Natural killer cell (primary cell): ENCODE measurements at regions of chr1 and their contacts with region 1.

Region 1: DNA sequence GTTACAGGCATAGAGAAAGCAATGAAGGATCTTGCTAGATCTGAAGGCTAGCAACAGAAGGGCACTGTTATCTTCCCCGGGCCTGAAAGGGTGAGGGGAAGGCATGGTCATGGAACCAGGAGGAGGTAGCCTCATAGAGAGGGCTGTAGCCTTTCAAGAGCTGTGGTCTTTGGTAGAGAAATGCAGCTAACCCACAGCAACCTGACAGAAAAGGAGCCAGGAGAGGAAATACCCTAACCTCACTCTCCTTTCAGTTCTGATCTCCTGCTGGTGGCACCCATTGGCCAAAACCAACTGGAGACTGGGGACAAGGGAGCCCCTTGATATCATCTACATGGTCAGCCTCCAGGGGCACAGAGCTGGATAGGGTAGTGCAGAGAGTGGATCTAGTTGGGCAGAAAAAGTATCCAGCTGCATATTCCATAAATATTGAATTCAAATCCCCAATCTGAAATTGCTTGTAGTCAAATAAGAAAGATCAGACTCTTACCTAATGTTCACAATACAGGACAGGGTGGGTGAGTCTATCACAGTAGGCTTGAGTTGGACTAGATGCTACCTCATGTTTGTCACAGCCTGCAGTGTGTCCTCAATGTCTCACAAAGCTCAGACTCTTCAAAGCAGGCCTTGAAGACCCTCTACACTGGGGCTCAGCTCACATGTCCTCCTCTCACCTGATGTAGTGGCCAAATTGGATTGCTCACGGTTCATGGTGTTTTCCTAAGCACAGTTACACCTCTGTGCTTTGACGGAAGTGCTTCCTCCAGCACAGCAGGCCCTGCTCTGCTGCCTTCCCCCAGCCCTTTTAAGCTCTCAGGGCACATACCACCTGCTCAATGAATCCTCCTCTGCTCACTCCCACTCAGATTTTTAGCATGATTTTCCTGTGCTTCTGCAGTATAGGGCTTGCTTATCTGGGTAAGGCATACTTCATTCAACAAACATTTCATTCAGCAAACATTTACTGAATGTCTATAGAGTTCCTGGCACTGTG is 74.1 kb upstream of the JUN start:
- DNase-seq: peak in 1 of 2 donors; percentile 62
- ATAC-seq: peak; percentile 32 to 68 (median 58)
- H3K4me3 ChIP-seq: no peak overlapping the region
- H3K4me3 Mint-ChIP-seq: no peak overlapping the region
- H3K27ac ChIP-seq: peak overlapping the region; percentile 14
- H3K27ac Mint-ChIP-seq: peak overlapping the region; percentile 42 to 74
- H3K4me1 ChIP-seq: peaks cover 39% of the 10 kb centered on the region
- H3K4me1 Mint-ChIP-seq: peaks cover 54 to 74% of the 10 kb centered on the region in 2 donors
- H3K27me3 ChIP-seq: no peaks in the 10 kb centered on the region
- H3K27me3 Mint-ChIP-seq: no peaks in the 10 kb centered on the region
- CTCF ChIP-seq: no peak

Region 2: DNA sequence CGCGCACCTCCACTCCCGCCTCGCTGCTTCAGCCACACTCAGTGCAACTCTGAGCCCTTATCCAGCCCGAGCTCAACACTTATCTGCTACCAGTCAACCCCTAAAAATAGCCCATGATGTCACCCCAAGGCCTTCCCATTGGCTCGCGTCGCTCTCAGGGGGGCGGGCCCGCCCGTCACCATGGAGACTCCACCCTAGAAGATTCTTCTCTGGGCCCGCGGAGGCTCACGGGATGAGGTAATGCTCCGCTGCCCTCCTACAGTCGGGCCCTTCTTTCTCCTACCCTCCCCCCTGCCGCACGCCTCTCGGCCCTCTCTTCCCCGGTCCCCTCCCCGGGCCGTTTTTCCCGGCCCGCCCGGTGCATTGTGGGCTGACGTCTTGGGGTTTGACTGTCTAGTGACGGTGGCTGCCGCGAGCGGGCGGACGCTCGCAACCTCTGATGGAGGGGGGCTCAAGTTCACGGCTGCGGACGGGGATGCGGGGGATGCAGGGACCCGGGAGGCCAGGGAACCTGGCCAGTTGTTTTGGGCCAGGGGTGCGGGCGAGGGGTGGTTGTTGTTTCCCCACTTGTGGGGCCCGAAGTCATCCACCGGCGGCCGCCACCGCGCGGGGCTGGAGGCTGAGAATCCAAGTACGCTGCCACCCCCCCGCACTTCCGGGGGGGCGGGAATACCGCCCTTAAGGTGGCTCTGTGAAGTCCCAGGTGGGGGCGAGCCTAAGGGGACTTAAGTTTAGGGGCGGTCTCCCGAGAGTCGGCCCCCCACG is 73.8 kb before region 1 on chr1 and contains the start of gene JUN:
- intact Hi-C with region 1: no loop called
- DNase-seq: peak; percentile 98 to 99
- ATAC-seq: peak; percentile 66 to 86 (median 69)
- H3K4me3 ChIP-seq: peak within 1 kb of the TSS; percentile 97
- H3K4me3 Mint-ChIP-seq: peak within 1 kb of the TSS; percentile 92
- H3K27ac ChIP-seq: peak within 1 kb of the TSS; percentile 98
- H3K27ac Mint-ChIP-seq: peak within 1 kb of the TSS; percentile 96 to 99
- H3K4me1 ChIP-seq: peaks cover 25% of the 10 kb centered on the region
- H3K4me1 Mint-ChIP-seq: peaks cover 47 to 61% of the 10 kb centered on the region in 2 donors
- H3K27me3 ChIP-seq: no peaks in the 10 kb centered on the region
- H3K27me3 Mint-ChIP-seq: peaks cover 0 to 9% of the 10 kb centered on the region in 2 donors
- CTCF ChIP-seq: no peak
- total RNA-seq, gene JUN: 1,209 to 1,942 (median 1,808) TPM

Region 3: DNA sequence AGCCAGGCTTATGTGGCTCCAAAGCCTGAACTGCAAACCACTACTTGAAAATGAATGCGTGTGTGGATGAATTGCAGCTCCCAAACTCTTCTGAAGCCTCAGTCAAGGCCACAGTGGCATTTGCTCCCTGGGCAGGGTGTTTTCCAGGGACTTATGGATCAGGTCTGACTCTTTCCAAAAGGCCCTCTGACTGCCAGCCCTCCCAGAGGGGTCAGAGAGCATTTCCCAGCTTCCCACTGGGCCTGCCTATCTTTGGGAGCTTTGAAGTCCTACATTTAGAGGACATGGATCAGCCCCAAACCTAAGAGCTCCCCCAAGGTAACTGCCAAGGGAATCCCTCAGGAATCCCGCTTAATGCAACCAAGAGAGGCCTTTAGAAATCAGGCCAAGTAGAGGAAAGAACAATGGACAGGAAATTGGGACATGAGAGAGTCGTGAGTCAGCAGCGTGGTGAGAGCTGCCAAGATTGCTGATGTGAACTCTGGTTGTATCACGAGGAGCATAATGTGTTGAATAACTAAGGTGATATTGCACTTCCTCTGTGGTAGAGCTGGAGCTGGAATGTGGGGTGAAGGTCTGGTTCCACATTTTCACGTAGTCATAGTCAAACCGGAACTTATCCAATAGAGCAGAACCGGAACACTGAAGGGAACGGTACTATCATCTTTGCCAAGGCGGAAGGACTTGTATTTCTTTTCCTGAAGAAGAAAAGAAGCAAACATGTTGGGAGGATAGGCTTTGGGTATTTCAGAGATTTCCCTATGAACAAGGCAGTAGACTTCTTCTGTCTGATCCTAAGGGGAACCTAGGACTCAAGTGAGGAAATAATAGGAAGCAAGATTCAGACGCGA is 25.3 kb after region 1 on chr1:
- intact Hi-C with region 1: loop called (anchors 2 kb)
- DNase-seq: peak in 1 of 2 donors; percentile 21
- ATAC-seq: peak in 2 of 3 donors; percentile 21 to 69
- H3K4me3 ChIP-seq: no peak overlapping the region
- H3K4me3 Mint-ChIP-seq: no peak overlapping the region
- H3K27ac ChIP-seq: peak overlapping the region; percentile 20
- H3K27ac Mint-ChIP-seq: peak overlapping the region in 1 of 2 donors; percentile 5
- H3K4me1 ChIP-seq: peaks cover 43% of the 10 kb centered on the region
- H3K4me1 Mint-ChIP-seq: peaks cover 51 to 88% of the 10 kb centered on the region in 2 donors
- H3K27me3 ChIP-seq: no peaks in the 10 kb centered on the region
- H3K27me3 Mint-ChIP-seq: no peaks in the 10 kb centered on the region
- CTCF ChIP-seq: no peak

Region 4: DNA sequence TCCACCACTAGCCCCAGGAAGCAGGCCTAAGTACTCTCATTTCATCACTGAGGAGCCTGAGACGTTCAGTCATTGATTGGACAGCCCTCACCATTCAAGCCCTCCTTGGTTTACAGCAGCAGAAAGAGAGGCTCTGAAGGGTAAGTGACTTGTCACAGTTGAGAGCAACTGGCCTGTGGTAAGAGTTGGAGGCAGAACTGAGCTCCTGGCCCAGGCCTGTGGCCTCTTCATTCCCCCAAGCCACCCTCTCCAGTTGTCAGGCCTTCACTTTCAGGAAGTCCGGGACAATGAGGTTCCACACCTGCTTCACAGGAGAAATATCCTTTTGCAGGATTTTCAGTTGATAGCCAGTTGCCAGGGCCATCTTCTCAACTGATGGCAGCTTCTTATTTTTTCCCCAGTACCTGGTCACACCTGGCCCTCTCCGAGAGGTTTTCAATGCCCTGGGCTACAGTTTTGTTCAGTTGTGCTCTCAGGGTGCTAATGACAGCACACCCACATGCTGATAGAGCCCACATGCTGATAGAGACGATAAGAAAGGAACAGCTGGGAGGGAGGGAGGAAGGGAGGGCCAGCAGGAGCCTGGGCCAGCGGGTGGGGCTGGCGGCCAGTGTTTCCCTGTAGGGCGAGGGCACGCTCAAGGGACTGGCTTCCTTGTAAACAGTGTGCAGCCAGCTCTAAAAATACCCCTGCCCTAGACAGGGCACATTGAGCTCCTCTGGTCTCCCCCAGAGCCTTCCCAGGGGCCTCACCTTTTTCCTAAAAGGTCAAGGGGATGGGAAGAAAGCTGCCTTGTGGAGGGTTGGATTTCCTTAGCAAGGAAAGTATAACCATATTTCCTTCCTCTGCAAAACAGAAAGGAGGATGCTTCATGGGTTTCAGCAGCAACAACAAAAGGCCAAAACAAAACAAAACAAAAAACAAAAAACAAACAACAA is 38.5 kb after region 1 on chr1:
- intact Hi-C with region 1: loop called (anchors 5 kb)
- DNase-seq: no peak
- ATAC-seq: peak in 2 of 3 donors; percentile 25 to 36
- H3K4me3 ChIP-seq: no peak overlapping the region
- H3K4me3 Mint-ChIP-seq: peak overlapping the region; percentile 67
- H3K27ac ChIP-seq: peak overlapping the region; percentile 6
- H3K27ac Mint-ChIP-seq: peak overlapping the region; percentile 63 to 84
- H3K4me1 ChIP-seq: peaks cover 29% of the 10 kb centered on the region
- H3K4me1 Mint-ChIP-seq: peaks cover 20 to 28% of the 10 kb centered on the region in 2 donors
- H3K27me3 ChIP-seq: no peaks in the 10 kb centered on the region
- H3K27me3 Mint-ChIP-seq: peaks cover 0 to 6% of the 10 kb centered on the region in 2 donors
- CTCF ChIP-seq: no peak